Calu3 (cell line): ENCODE measurements at regions of chr11 and their contacts with region 1.

Region 1: DNA sequence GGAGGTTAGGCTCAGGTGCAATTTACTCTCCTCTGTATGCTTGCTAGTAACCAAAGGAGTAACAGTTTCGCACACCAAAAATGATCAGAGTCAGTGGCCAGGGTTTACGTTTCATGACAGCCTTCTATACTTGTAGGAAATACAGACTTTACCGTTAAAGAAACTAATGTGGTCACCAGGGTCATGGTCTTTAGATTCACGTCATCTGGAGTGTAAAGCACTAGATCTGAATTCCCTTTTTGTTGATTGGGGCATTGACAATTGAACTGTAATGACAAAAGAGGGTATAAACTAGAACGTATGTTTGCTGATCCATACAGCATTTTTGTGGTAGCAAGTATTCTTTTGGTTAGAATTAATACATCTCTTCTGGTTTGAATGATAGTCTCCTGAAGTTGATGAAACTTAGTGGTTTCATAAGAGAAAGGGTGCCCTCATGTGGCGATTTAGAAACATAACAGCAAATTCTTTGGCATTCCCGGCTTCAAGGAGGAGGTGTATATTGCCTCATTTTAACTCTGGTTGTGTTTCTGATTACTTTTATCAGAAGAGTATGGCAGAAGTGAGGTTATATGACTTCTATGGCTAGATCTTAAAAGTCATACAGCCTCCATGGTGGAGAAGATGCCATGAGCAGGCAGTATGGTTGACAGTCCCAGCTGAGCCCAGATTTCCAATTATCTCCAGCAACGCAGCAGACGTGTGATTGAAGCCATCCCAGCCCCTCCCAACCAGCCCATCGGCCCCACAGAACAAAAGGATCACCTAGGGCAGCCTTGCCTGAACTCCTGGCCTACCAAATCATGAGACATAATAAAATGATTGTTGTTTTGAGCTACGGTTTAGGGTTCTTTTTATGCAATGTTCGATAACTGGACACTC is 35.1 kb downstream of the MMP7 start:
- DNase-seq: peak; percentile 54
- H3K4me3 Mint-ChIP-seq: peak overlapping the region; percentile 18
- H3K27ac Mint-ChIP-seq: peak overlapping the region; percentile 11
- H3K4me1 Mint-ChIP-seq: no peaks in the 10 kb centered on the region
- H3K27me3 Mint-ChIP-seq: no peaks in the 10 kb centered on the region
- CTCF ChIP-seq: peak; percentile 28

Region 2: DNA sequence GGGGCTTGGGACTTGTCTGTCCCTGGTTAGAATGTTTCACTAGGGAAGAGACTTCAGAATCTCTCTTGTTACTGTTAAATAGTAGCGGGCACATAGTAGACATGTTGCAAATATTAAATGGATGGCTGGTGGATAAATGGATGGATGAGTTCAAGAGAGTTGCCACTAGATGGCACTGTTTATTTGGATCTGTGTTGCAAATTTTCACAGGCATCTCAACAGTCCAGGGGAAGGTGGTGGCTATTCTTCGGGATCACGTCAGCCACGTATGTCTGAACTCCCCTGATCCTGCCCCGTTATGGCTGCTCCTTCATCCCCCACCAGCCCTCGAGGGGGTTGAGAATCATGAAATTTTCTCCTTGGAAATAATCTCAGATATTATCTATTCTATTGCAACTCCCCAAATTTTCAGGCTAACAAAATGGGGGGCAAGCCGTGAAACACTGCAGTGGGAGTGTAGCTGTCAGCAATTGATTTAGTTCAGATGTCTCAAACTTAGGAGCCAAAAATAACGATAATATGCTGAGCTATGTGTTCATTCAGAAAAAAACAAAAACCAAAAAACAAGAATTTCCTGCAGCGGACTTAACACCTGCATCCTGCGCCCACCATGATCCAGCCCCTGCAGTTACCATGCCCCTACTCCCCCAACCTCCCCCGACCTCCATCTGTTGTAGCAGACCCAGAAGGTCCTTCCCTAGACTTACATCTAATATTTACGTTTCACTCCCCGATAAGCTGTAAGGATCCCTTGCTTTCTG is 207.3 kb before region 1 on chr11:
- CTCF ChIA-PET with region 1: no interaction called
- intact Hi-C with region 1: loop called (anchors 2 kb)
- DNase-seq: peak; percentile 45
- H3K4me3 Mint-ChIP-seq: peak overlapping the region; percentile 34
- H3K27ac Mint-ChIP-seq: peak overlapping the region; percentile 11
- H3K4me1 Mint-ChIP-seq: peaks cover 34% of the 10 kb centered on the region
- H3K27me3 Mint-ChIP-seq: no peaks in the 10 kb centered on the region
- CTCF ChIP-seq: peak; percentile 42

Region 3: DNA sequence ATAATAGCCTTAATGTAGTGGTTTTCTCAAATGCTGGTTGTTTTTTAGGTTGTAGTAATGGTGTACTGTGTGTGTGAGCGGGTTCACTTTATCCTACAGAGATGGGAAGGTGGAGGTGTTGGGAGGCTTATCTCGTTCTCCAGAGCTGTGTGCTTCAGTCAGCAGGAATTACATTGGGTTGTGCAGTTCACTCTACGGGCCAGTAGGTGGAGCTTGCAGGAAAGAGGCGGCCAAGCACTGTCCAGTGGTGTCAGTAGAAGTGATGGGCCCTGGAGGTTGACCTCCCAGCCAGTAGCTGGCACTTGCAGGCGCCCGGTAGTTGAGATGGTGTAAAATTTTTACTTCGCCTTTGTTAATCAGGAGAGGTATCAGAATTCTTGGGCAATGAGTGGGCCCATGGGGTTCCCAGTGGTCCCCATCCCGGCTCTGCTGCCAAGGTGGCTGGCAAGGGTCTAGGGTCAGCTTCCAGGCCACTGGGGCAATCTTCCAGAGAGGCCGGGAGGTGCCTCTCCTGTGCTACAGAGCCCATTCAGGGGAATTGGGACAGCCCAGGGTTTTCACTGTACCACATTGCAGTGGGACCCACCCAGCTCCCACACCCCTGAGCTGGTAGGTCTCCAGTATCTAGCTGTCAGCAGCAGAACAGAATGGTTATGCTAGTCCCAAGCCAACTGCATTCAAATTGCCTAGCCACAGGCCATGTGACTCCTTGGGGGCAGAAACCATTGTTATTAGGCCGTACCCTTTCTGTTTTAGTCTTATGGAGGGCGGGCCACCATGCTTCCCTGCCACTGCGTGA is 104.5 kb before region 1 on chr11:
- CTCF ChIA-PET with region 1: interaction called, 15 read pairs
- intact Hi-C with region 1: loop called (anchors 1 kb)
- DNase-seq: peak; percentile 64
- H3K4me3 Mint-ChIP-seq: no peak overlapping the region
- H3K27ac Mint-ChIP-seq: no peak overlapping the region
- H3K4me1 Mint-ChIP-seq: peaks cover 15% of the 10 kb centered on the region
- H3K27me3 Mint-ChIP-seq: no peaks in the 10 kb centered on the region
- CTCF ChIP-seq: peak; percentile 77

Region 4: GRCh38 chr11:102614485-102614884 is 119.1 kb after region 1 on chr11:
- CTCF ChIA-PET with region 1: interaction called, 6 read pairs
- intact Hi-C with region 1: loop called (anchors 1 kb)
- DNase-seq: no peak
- H3K4me3 Mint-ChIP-seq: no peak overlapping the region
- H3K27ac Mint-ChIP-seq: no peak overlapping the region
- H3K4me1 Mint-ChIP-seq: peaks cover 35% of the 10 kb centered on the region
- H3K27me3 Mint-ChIP-seq: no peaks in the 10 kb centered on the region
- CTCF ChIP-seq: no peak